ENCODE measurements at regions of chr12 and their contacts with region 1.

Region 1: DNA sequence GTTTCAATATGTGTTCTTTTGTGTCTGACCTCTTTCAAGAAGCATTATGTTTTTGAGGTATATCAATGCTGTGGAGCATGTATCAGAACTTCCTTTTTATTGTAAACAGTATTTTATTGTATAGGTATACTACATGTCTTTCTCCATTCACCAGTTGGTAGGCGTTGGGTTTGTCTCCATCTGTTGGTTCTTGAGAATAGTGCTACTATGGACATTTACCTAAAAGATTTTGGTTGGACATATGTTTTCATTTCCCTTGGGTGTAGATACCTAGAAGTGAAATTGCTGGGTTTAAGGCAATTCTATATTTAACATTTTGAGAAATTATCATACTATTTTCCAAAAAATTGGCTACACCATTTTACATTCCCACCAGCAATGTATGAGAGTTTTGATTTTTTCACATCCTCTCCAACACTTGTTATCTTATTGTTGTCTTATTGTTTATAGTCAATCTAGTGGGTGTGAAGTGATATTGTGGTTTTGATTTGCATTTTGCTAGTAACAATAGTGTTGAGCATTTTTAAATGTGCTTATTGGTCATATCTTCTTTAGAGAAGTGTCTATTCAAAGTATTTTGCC is 409.2 kb downstream of the IPO8 start:
- DNase-seq: no peak
- H3K4me3 ChIP-seq: no peak overlapping the region
- H3K27ac ChIP-seq: no peak overlapping the region
- H3K4me1 ChIP-seq: no peaks in the 10 kb centered on the region
- H3K27me3 ChIP-seq: no peaks in the 10 kb centered on the region
- CTCF ChIP-seq: peak; percentile 51 to 53

Region 2: GRCh38 chr12:29519585-29520182 is 766.8 kb before region 1 on chr12:
- intact Hi-C with region 1: loop called (anchors 10 kb)
- DNase-seq: no peak
- H3K4me3 ChIP-seq: no peak overlapping the region
- H3K27ac ChIP-seq: no peak overlapping the region
- H3K4me1 ChIP-seq: peaks cover 0 to 32% (median 0%) of the 10 kb centered on the region in 4 donors
- H3K27me3 ChIP-seq: no peaks in the 10 kb centered on the region
- CTCF ChIP-seq: peak; percentile 55 to 64

Region 3: DNA sequence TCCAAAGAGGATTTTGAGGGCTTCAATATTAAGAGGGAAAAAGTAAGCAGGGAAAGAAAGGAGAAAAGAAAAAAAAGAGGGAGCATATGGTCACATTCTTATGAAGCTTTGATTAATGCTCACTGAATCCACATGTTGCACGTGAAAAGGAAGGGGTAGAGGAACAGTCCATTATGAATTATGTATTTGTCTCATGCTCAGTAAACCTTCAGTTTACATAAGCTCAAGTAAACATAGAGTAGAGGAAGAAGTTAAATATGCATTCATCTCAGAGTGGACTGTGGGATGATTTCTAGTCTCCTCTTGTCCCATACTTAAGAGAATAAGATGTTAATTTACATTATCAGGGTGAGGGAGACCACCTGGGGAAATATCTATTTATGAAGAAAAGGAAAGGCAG is 74.7 kb after region 1 on chr12:
- intact Hi-C with region 1: no loop called
- DNase-seq: no peak
- H3K4me3 ChIP-seq: no peak overlapping the region
- H3K27ac ChIP-seq: no peak overlapping the region
- H3K4me1 ChIP-seq: no peaks in the 10 kb centered on the region
- H3K27me3 ChIP-seq: no peaks in the 10 kb centered on the region
- CTCF ChIP-seq: no peak

Region 4: GRCh38 chr12:30395190-30395589 is 108.8 kb after region 1 on chr12:
- intact Hi-C with region 1: no loop called
- DNase-seq: no peak
- H3K4me3 ChIP-seq: no peak overlapping the region
- H3K27ac ChIP-seq: no peak overlapping the region
- H3K4me1 ChIP-seq: no peaks in the 10 kb centered on the region
- H3K27me3 ChIP-seq: no peaks in the 10 kb centered on the region
- CTCF ChIP-seq: no peak